ENCODE measurements at regions of chr2 and their contacts with region 1.

Region 1: GRCh38 chr2:187319441-187320108 is 128.5 kb downstream of the CALCRL start:
- DNase-seq: peak; percentile 5
- ATAC-seq: peak; percentile 54
- H3K4me3 ChIP-seq: no peak overlapping the region
- H3K27ac ChIP-seq: no peak overlapping the region
- H3K4me1 ChIP-seq: no peaks in the 10 kb centered on the region
- H3K27me3 ChIP-seq: no peaks in the 10 kb centered on the region
- CTCF ChIP-seq: no peak

Region 2: DNA sequence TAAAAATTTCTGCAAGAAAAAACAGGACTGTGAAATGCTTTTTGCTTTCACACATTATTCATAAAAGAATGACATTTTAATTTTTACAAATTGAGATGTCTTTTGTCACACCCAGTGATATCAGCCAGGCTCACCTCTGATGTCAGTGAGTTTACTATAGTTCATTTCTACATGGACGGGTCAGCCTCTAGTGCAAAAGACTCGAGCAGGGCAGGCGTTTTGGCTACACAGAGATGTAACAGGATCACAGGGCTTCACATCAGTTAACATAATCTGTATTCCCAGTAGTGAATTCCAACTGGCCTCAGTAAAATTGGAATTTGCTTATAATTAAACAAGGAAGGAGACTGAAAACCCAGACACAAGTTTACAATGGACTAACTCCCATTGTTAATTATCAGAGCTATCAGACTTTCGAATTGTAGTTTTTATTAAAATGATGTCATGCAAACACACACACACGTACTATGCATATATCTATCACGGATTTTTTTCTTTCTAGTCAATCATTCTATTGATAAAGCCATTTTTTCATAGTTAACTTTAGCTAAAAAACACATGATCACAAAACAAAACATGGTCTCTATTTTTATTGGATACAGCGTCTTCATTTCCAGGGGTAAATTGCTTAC is 194.9 kb before region 1 on chr2:
- CTCF ChIA-PET with region 1: no interaction called
- POLR2A ChIA-PET with region 1: no interaction called
- intact Hi-C with region 1: no loop called
- DNase-seq: no peak
- ATAC-seq: no peak
- H3K4me3 ChIP-seq: no peak overlapping the region
- H3K27ac ChIP-seq: no peak overlapping the region
- H3K4me1 ChIP-seq: no peaks in the 10 kb centered on the region
- H3K27me3 ChIP-seq: peaks cover 11% of the 10 kb centered on the region; the same call in 1 of the 2 replicates
- CTCF ChIP-seq: no peak

Region 3: GRCh38 chr2:187442378-187442777 is 122.8 kb after region 1 on chr2:
- CTCF ChIA-PET with region 1: no interaction called
- POLR2A ChIA-PET with region 1: no interaction called
- intact Hi-C with region 1: loop called (anchors 5 kb)
- DNase-seq: no peak
- ATAC-seq: no peak
- H3K4me3 ChIP-seq: no peak overlapping the region
- H3K27ac ChIP-seq: no peak overlapping the region
- H3K4me1 ChIP-seq: no peaks in the 10 kb centered on the region
- H3K27me3 ChIP-seq: no peaks in the 10 kb centered on the region
- CTCF ChIP-seq: no peak; the same call in 1 of the 2 replicates